Calu3 (cell line): ENCODE measurements at regions of chr5 and their contacts with region 1.

Region 1: GRCh38 chr5:180291943-180292831 is at the start of gene MAPK9:
- DNase-seq: peak; percentile 91
- H3K4me3 Mint-ChIP-seq: peak within 1 kb of the TSS; percentile 74
- H3K27ac Mint-ChIP-seq: peak within 1 kb of the TSS; percentile 86
- H3K4me1 Mint-ChIP-seq: peaks cover 32% of the 10 kb centered on the region
- H3K27me3 Mint-ChIP-seq: no peaks in the 10 kb centered on the region
- CTCF ChIP-seq: no peak
- total RNA-seq, gene MAPK9: 63.3 and 65.4 TPM in 2 replicates

Region 2: GRCh38 chr5:180126726-180127681 is 165.2 kb before region 1 on chr5:
- CTCF ChIA-PET with region 1: no interaction called
- intact Hi-C with region 1: loop called (anchors 10 kb)
- DNase-seq: peak; percentile 79
- H3K4me3 Mint-ChIP-seq: no peak overlapping the region
- H3K27ac Mint-ChIP-seq: no peak overlapping the region
- H3K4me1 Mint-ChIP-seq: peaks cover 23% of the 10 kb centered on the region
- H3K27me3 Mint-ChIP-seq: peaks cover 81% of the 10 kb centered on the region
- CTCF ChIP-seq: peak; percentile 93

Region 3: GRCh38 chr5:180155365-180155926 is 136.7 kb before region 1 on chr5:
- CTCF ChIA-PET with region 1: no interaction called
- intact Hi-C with region 1: no loop called
- DNase-seq: no peak
- H3K4me3 Mint-ChIP-seq: no peak overlapping the region
- H3K27ac Mint-ChIP-seq: no peak overlapping the region
- H3K4me1 Mint-ChIP-seq: no peaks in the 10 kb centered on the region
- H3K27me3 Mint-ChIP-seq: peaks cover 41% of the 10 kb centered on the region
- CTCF ChIP-seq: no peak

Region 4: DNA sequence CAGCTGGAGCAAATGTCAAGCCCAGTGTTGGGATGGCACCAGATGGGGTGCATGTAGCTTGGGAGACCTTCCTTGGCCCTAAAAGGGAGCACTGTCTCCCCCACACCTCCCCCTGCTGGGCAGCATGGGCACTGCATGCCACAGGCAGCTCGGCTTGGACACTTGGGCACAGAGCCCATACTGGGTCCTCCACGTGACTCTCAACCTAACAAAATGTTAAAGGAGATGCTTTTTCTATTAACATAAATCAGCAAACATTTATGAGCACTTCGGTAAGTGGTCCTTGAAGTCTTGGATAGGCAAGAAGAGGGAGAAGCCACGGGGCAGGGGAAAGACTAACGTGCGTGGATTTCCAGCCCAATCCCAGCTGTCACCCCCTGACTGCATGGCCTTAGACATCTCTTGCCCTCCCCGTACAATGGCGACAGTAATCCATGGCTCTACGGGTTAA is 23.6 kb after region 1 on chr5:
- CTCF ChIA-PET with region 1: interaction called, 6 read pairs
- intact Hi-C with region 1: loop called (anchors 2 kb)
- DNase-seq: peak; percentile 83
- H3K4me3 Mint-ChIP-seq: no peak overlapping the region
- H3K27ac Mint-ChIP-seq: no peak overlapping the region
- H3K4me1 Mint-ChIP-seq: no peaks in the 10 kb centered on the region
- H3K27me3 Mint-ChIP-seq: peaks cover 36% of the 10 kb centered on the region
- CTCF ChIP-seq: peak; percentile 95

Region 5: DNA sequence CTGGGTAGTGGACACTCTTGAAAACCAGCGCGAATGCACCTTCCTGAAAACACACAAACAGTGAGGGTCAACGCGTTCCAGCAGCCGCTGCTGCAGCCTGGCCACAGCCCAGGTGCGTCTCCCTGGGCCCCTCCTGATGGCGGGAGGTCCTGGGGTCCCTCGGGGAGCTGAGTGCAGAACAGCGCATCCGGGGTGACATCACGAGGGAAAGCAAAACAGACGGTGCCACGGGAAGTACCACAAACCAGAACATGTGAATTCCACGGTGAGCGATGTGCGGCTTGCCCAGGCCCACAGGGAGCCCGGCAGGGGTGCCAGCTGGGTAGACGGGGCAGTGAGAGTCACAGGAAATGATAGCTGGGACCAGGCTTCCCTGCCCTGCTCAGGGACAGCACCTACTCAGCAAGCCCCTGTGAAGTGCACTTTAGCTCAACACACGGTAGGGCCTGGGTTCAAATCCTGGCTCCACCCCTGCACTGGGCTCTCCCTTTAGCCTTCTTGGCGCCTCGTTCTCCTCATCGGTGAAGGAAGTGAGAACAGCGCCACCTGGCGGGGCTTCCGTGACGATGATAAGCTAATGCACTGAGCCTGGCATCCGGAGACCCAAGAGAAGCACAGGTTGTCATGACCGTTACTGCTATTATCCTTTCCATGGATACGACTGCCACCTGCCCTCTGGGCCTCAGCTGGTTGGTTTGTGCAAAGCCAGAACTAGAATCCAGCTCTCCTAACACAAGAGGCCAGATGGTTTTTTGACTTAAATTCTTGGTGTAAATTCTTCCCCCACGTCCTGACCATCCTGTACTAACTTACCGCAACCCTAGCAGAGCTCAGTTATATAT is 36.3 kb after region 1 on chr5:
- CTCF ChIA-PET with region 1: interaction called, 14 read pairs
- intact Hi-C with region 1: loop called (anchors 5 kb)
- DNase-seq: peak; percentile 90
- H3K4me3 Mint-ChIP-seq: no peak overlapping the region
- H3K27ac Mint-ChIP-seq: no peak overlapping the region
- H3K4me1 Mint-ChIP-seq: peaks cover 24% of the 10 kb centered on the region
- H3K27me3 Mint-ChIP-seq: peaks cover 24% of the 10 kb centered on the region
- CTCF ChIP-seq: peak; percentile 92

Region 6: DNA sequence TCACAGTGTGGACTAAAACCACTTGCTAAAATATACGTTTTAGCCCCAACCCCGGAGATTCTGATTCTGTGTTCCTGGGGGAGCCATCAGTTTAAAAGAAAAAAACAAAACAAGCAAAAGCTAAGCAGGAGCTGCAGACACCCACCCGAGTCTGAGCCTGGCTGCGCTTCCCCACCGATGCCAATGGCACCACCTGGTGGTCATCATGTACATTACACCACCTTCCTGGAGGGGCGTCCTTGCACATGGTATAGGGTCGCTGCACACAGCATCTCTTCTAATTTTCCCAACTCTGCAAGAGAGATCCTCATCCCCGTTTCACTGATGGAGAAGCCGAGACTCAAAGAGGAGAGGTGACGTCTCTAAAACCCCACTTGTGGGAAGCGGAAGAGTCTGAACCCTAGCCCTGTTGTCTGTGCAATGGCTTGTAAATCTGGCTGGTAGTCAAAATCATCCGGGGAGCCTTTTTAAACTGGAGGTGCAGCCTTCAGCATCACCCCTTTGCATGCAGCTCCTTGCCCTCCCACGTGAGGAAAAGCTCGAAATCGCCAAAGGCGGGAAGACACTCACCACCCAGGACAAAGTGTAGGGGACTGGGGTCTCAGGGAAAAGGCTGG is 178.9 kb after region 1 on chr5:
- CTCF ChIA-PET with region 1: interaction called, 6 read pairs
- intact Hi-C with region 1: loop called (anchors 1 kb)
- DNase-seq: peak; percentile 76
- H3K4me3 Mint-ChIP-seq: no peak overlapping the region
- H3K27ac Mint-ChIP-seq: no peak overlapping the region
- H3K4me1 Mint-ChIP-seq: peaks cover 41% of the 10 kb centered on the region
- H3K27me3 Mint-ChIP-seq: no peaks in the 10 kb centered on the region
- CTCF ChIP-seq: peak; percentile 97

Region 7: DNA sequence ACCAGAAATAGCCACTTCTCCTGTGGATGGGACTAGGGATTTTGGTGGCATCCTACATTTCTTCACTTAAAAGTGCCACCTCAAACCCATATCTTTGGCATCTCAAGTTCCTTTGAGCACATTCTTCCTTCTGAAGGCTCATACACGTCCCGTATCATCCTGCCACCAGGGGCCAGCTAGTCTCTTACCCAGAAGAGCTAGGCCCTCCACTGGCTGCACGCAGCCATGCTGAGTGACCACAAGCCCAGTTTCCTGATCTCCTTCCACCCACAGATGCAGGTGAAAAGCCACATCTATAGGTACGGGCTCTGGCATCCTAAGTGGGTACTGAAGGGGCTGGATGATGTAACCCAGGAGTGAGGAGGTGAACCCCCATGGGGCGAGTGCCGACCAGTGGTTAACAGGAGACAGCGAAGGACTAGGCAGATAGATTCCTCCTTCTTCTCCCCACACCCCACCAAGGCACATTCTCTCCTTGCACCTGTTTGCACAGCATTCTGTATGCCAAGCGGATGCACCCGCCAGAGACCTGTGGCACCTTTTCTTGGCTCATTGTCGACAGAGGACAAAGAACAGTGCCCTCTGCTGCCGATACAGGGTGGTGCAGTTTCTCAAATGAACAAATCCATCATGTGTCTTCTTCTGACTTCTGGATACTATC is 313.5 kb after region 1 on chr5:
- CTCF ChIA-PET with region 1: no interaction called
- intact Hi-C with region 1: loop called (anchors 10 kb)
- DNase-seq: peak; percentile 73
- H3K4me3 Mint-ChIP-seq: no peak overlapping the region
- H3K27ac Mint-ChIP-seq: no peak overlapping the region
- H3K4me1 Mint-ChIP-seq: peaks cover 7% of the 10 kb centered on the region
- H3K27me3 Mint-ChIP-seq: peaks cover 47% of the 10 kb centered on the region
- CTCF ChIP-seq: peak; percentile 84